ENCODE measurements at regions of chr14 and their contacts with region 1.

Region 1: GRCh38 chr14:94485944-94486841 is 10.2 kb upstream of the SERPINA9 start:
- DNase-seq: peak; percentile 38
- ATAC-seq: peak; percentile 56
- H3K4me3 Mint-ChIP-seq: no peak overlapping the region
- H3K27ac Mint-ChIP-seq: no peak overlapping the region
- H3K4me1 Mint-ChIP-seq: no peaks in the 10 kb centered on the region
- H3K27me3 Mint-ChIP-seq: peaks cover 14% of the 10 kb centered on the region
- CTCF ChIP-seq: peak; percentile 99

Region 2: DNA sequence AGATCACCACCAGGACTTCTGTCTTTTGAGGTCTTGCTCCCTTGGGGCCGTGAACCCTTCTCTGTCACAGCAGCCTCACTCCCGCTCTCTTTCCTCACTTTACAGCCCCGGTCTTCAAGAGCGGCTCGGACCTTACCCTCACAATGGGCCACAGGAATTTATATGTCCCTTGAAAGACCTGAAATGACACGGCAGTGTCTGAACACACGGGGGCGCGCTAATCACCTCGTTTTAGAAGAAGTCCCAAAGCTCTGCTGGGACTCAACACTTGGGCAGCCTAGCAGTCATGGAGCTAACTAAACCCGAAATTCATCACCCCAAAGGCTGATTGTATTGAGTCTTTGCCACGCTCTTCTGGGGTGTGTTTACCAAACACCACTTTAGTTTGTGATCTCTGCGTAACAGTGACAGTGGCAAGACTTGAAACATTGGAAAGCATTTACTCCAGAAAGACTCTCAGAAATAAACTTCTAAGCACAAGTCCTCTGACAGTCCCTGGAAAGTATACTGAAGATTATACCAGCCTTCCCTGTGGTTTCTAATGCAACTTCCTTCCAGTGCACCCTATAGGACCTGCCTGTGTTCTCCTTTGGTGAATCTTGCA is 62.6 kb before region 1 on chr14:
- CTCF ChIA-PET with region 1: interaction called, 11 read pairs
- POLR2A ChIA-PET with region 1: no interaction called
- intact Hi-C with region 1: loop called (anchors 5 kb)
- DNase-seq: peak; percentile 76
- ATAC-seq: peak; percentile 53
- H3K4me3 Mint-ChIP-seq: no peak overlapping the region
- H3K27ac Mint-ChIP-seq: no peak overlapping the region
- H3K4me1 Mint-ChIP-seq: no peaks in the 10 kb centered on the region
- H3K27me3 Mint-ChIP-seq: peaks cover 25% of the 10 kb centered on the region
- CTCF ChIP-seq: peak; percentile 57

Region 3: DNA sequence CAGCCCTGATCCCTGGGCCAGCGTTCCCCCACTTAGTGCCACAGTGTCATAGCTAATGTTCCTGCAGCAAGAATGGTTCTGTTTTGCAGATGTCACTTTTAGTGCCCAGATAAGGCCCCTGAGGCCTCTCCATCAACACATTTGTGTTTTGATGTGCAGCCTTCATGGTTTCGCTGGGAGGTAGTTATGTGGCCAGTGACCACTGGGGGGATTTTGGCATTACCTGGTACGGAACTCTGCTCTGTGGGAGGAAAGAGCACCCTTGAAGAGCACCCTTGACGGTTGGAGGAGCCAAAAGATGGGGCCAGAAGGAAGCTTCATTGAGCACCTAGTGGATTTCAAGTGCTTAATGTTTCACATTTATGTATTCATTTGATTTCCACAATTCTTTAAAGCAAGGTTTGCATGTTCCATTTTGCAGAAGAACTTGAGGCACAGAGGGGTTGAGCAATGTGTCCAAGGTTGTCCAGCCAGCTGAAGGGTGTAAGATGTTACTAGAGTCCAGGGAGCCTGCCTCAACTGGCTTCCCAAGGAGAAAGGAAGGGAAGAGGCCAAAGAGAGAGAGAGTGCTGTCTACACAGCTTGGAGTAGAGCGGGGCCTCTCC is 46.6 kb before region 1 on chr14:
- CTCF ChIA-PET with region 1: interaction called, 14 read pairs
- POLR2A ChIA-PET with region 1: no interaction called
- intact Hi-C with region 1: no loop called
- DNase-seq: no peak
- ATAC-seq: no peak
- H3K4me3 Mint-ChIP-seq: no peak overlapping the region
- H3K27ac Mint-ChIP-seq: no peak overlapping the region
- H3K4me1 Mint-ChIP-seq: no peaks in the 10 kb centered on the region
- H3K27me3 Mint-ChIP-seq: peaks cover 12% of the 10 kb centered on the region
- CTCF ChIP-seq: no peak

Region 4: DNA sequence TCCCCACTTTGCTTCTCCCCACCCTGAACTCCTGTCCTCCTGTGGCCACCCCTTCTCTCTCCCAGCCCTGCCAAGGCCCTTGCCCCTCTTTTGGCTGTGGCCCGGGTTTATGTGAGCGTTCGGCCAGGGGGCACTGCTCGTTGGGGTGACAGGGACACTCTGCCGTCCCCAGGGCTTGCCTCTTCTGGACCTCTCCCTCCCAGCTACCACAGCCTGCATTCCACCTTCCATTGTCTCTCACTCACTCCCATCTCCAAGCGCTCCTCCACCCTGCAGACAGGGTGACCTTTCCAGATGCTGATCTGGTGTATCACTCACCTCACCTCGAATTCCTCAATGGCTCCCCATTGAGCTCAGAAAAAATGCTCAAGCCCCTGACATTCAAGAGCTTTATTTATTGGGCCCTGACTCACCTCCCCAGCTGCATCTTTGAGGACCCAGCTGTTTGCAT is 11.6 kb before region 1 on chr14:
- CTCF ChIA-PET with region 1: interaction called, 12 read pairs
- POLR2A ChIA-PET with region 1: no interaction called
- intact Hi-C with region 1: no loop called
- DNase-seq: no peak
- ATAC-seq: no peak
- H3K4me3 Mint-ChIP-seq: no peak overlapping the region
- H3K27ac Mint-ChIP-seq: no peak overlapping the region
- H3K4me1 Mint-ChIP-seq: no peaks in the 10 kb centered on the region
- H3K27me3 Mint-ChIP-seq: peaks cover 6% of the 10 kb centered on the region
- CTCF ChIP-seq: no peak

Region 5: DNA sequence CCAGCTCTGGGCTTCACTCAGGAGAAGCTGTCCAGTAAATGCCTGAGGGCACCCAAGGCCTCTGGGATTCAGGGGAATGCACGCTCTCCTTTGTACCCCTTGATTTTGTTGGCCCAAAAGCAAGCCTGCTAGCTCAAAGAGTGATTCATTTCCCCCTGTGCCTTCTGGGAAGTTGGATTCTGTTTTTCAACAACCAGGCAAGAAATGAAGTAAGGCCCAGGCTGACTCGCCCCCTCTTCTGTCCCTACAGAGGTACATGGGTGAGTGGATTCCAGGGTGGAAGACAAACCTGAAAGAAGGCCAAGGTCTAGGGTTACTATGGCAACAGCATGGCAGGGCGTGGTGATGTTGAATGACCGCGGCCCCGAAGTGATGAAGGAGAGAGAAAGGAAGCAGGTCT is 85.8 kb after region 1 on chr14:
- CTCF ChIA-PET with region 1: no interaction called
- POLR2A ChIA-PET with region 1: no interaction called
- intact Hi-C with region 1: no loop called
- DNase-seq: no peak
- ATAC-seq: no peak
- H3K4me3 Mint-ChIP-seq: no peak overlapping the region
- H3K27ac Mint-ChIP-seq: no peak overlapping the region
- H3K4me1 Mint-ChIP-seq: no peaks in the 10 kb centered on the region
- H3K27me3 Mint-ChIP-seq: no peaks in the 10 kb centered on the region
- CTCF ChIP-seq: no peak

Region 6: DNA sequence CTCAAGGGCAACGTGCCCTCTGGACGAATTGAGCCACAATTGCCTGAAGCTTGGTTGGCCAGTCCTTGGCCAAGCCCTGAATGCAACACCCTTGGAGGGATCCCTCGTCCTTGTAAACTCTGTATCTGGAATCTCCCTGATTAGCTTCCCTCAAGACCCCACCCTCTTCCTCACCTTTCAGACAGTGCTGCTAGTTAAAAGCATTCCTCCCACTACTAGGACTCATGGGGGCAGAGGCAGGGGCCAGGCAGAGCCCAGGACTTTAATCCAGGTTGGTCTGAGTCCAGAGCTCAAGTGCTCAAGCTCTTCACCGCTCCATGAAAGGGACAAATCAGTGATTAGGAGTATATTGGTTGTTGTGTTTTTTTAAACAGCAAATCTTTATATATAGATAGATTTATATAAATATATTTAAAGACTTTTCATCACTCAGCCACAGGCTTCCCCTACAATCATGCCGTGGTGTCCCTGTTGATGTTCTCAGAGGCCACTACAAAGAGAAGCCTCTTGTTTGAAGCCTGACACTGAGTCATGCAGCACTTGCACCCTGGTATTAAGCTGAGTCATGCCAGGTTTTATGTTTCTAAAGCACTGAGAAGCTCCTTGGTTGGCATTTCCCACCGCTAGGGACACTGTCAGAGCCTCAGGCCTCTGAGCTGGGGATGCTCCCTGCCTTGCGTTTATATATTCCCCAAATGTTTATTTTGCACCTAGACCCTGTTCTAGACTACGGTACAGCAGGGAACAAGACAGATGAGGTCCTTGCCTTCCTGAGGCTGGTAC is 337.6 kb after region 1 on chr14:
- CTCF ChIA-PET with region 1: no interaction called
- POLR2A ChIA-PET with region 1: no interaction called
- intact Hi-C with region 1: no loop called
- DNase-seq: no peak
- ATAC-seq: no peak
- H3K4me3 Mint-ChIP-seq: no peak overlapping the region
- H3K27ac Mint-ChIP-seq: no peak overlapping the region
- H3K4me1 Mint-ChIP-seq: no peaks in the 10 kb centered on the region
- H3K27me3 Mint-ChIP-seq: peaks cover 12% of the 10 kb centered on the region
- CTCF ChIP-seq: no peak